CD4-positive, alpha-beta memory T cell (primary cell): ENCODE measurements at regions of chr12 and their contacts with region 1.

Region 1: DNA sequence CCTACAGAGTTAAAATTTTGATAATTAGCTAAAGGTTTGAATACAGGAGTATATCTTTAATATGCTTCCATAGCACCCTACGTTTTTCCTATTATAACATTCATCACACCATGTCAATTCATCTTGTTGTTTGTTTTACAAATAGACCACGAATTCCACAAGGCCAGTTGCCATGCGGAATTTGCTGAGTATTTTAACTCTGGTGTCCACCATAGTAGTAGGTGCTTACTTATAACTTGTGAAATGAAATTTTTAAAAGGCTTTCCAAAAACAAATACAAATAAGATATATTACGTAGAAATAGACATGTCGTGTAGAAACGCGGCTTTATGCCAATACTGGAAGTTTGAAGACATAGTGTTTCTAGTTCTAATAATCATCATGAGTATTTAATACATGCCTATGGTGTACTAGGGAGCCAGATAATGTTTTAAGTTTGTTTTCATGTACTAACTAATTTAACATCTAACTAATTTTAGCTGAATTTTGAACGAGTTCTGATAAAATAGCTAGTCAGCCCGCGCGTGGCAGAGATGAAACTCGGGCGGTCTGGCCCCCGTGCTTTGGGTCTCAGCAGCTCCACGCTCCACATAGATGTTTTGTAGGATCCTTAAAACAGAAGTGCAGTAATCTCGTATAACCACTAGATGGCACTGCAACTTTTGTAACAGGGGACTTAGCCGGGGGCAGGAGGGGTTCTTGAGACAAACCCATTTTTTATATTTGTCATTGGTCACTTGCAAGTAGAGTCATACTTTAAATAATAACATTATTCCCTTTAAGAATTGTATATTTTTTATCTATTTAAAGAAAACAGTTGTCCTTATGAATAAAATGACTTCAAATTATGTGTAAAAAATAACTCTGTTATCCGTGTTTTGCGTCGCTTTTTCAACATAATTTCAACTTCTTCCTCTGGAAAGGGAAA is 10.2 kb downstream of the CD69 start:
- DNase-seq: peak; percentile 67 to 75 (median 72)
- H3K4me3 ChIP-seq: no peak overlapping the region
- H3K4me3 Mint-ChIP-seq: peak overlapping the region; percentile 37 to 78 (median 72)
- H3K27ac ChIP-seq: peak overlapping the region; percentile 2
- H3K27ac Mint-ChIP-seq: peak overlapping the region; percentile 72 to 94 (median 85)
- H3K4me1 ChIP-seq: peaks cover 55% of the 10 kb centered on the region
- H3K4me1 Mint-ChIP-seq: peaks cover 30 to 51% (median 42%) of the 10 kb centered on the region in 4 donors
- H3K27me3 ChIP-seq: no peaks in the 10 kb centered on the region
- H3K27me3 Mint-ChIP-seq: no peaks in the 10 kb centered on the region

Region 2: GRCh38 chr12:9634177-9634803 is 116.2 kb before region 1 on chr12:
- CTCF ChIA-PET with region 1: interaction called, 53 read pairs
- POLR2A ChIA-PET with region 1: no interaction called
- intact Hi-C with region 1: no loop called
- DNase-seq: peak; percentile 76 to 77 (median 77)
- H3K4me3 ChIP-seq: no peak overlapping the region
- H3K4me3 Mint-ChIP-seq: peak overlapping the region in 6 of 8 donors; percentile 51 to 80 (median 61)
- H3K27ac ChIP-seq: no peak overlapping the region
- H3K27ac Mint-ChIP-seq: peak overlapping the region; percentile 22 to 97 (median 91)
- H3K4me1 ChIP-seq: peaks cover 70% of the 10 kb centered on the region
- H3K4me1 Mint-ChIP-seq: peaks cover 47 to 92% (median 73%) of the 10 kb centered on the region in 4 donors
- H3K27me3 ChIP-seq: no peaks in the 10 kb centered on the region
- H3K27me3 Mint-ChIP-seq: no peaks in the 10 kb centered on the region

Region 3: DNA sequence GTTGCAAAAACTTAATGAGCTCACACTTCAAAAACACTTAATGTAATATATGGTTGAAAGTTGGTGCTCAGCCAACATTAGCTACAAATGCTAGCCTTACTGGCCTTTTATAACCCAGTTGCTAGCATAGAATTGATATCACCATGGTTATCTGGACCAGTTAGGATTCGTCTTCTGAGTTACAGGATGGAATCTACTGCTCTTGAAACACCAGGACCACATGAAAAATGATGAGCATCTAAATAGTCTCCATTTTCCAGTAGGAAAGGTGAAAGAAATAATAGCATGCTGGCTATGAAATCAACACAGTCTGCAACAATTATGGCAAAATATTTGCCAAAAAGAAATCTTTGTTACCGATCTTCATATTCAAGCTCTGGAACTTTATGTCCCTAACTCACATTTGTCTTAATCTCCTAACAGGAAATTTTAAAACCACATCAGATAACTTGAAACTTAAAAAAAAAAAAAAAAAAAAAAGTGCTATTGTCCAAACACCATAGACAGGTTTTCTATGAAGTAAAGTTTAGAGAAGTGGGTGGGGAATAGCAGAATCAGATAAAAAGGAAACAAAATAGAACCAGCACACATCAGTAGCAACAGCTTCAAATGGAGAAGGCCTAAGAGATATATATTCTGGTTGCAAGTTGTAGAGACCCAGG is 22.8 kb after region 1 on chr12:
- CTCF ChIA-PET with region 1: interaction called, 68 read pairs
- POLR2A ChIA-PET with region 1: interaction called, 151 read pairs
- intact Hi-C with region 1: loop called (anchors 2 kb)
- DNase-seq: peak in 3 of 5 donors; percentile 45 to 59 (median 50)
- H3K4me3 ChIP-seq: no peak overlapping the region
- H3K4me3 Mint-ChIP-seq: peak overlapping the region; percentile 26 to 79 (median 68)
- H3K27ac ChIP-seq: peak overlapping the region; percentile 24
- H3K27ac Mint-ChIP-seq: peak overlapping the region; percentile 15 to 88 (median 77)
- H3K4me1 ChIP-seq: peaks cover 82% of the 10 kb centered on the region
- H3K4me1 Mint-ChIP-seq: peaks cover 68 to 93% (median 82%) of the 10 kb centered on the region in 4 donors
- H3K27me3 ChIP-seq: no peaks in the 10 kb centered on the region
- H3K27me3 Mint-ChIP-seq: no peaks in the 10 kb centered on the region

Region 4: GRCh38 chr12:9797722-9798619 is 47.4 kb after region 1 on chr12:
- CTCF ChIA-PET with region 1: interaction called, 889 read pairs
- POLR2A ChIA-PET with region 1: interaction called, 422 read pairs
- intact Hi-C with region 1: loop called (anchors 1 kb)
- DNase-seq: peak; percentile 73 to 79 (median 75)
- H3K4me3 ChIP-seq: no peak overlapping the region
- H3K4me3 Mint-ChIP-seq: peak overlapping the region in 4 of 8 donors; percentile 4 to 70 (median 41)
- H3K27ac ChIP-seq: no peak overlapping the region
- H3K27ac Mint-ChIP-seq: peak overlapping the region in 6 of 7 donors; percentile 57 to 89 (median 81)
- H3K4me1 ChIP-seq: peaks cover 51% of the 10 kb centered on the region
- H3K4me1 Mint-ChIP-seq: peaks cover 35 to 48% (median 43%) of the 10 kb centered on the region in 4 donors
- H3K27me3 ChIP-seq: no peaks in the 10 kb centered on the region
- H3K27me3 Mint-ChIP-seq: peaks cover 0 to 2% of the 10 kb centered on the region in 2 donors

Region 5: DNA sequence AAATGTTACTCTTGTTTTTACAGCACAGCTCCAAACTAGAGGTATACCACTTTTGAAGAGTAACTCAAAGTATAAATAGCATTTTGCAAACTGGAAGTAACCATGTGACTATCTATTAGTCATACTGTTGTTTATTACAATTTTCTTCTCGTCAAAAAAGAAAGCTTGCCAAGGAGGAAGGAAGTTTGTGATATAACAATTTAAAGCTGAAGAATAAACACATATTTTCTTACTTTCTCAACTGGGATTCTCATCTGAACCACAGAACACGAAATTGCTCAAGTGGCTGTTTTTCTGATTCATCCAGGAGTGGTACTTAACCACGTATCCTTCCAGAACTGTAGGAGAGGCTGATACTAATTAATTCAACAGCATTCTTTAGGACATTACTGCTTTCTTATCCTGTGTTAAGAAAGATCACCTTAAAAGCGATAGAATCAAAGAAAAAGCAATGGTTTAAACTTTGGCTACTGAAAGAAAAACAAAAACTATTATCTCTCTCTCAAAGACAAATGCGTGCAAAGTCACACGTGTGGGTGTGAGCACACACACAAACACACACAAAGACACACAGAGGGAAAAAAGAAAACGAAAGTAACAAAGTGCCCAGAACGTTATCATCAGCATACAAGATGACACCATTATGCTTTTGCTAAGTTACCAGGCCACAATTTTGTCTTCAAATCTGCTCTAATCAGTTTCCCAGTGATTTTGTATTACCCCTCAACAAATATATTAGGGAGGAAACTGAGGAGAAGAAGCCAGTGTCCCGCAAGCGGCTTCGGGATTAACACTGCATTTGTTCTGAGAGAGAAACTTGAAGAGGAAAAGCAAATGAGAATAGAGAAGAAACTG is 119.0 kb after region 1 on chr12 and contains the start of gene CLEC2B:
- CTCF ChIA-PET with region 1: interaction called, 20 read pairs
- POLR2A ChIA-PET with region 1: interaction called, 8 read pairs
- intact Hi-C with region 1: loop called (anchors 2 kb)
- DNase-seq: peak; percentile 58 to 74 (median 62)
- H3K4me3 ChIP-seq: peak within 1 kb of the TSS; percentile 55 to 67
- H3K4me3 Mint-ChIP-seq: peak within 1 kb of the TSS; percentile 89 to 96 (median 92)
- H3K27ac ChIP-seq: peak within 1 kb of the TSS; percentile 83
- H3K27ac Mint-ChIP-seq: peak within 1 kb of the TSS; percentile 94 to 100 (median 96)
- H3K4me1 ChIP-seq: peaks cover 15% of the 10 kb centered on the region
- H3K4me1 Mint-ChIP-seq: peaks cover 9 to 33% (median 19%) of the 10 kb centered on the region in 4 donors
- H3K27me3 ChIP-seq: no peaks in the 10 kb centered on the region
- H3K27me3 Mint-ChIP-seq: no peaks in the 10 kb centered on the region
- total RNA-seq, gene CLEC2B: 72.5 to 74.6 TPM

Region 6: DNA sequence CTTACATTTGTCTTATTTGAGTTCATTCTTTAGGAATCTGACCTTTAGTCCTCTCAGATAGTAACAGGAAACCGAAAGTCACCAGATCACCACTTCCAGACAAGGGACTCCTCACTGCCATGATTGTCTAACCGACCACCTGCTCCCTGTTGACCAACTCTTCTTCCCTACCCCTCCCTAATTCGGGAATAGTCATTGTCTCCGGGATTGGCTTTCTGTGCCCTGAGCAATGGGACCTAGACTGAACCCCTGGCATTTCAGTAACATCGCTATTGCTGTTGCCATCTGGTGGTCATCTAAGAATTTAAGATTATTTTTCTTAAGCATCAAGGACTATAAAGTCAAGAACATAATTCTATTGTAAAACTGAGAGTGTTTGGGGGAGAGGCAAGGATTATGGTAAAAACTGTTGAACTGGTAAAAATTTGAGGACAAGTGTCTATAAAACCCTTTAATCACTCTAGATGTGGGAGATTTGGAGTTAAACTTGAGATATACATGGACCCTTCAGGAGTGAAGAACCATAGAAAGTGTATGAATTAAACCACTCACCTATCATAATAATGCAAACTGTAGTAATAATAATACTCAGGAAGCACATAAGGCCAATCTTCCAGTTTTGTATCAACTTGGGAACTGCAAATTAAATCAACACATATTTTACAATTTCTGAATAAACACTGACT is 175.3 kb after region 1 on chr12:
- CTCF ChIA-PET with region 1: interaction called, 52 read pairs
- POLR2A ChIA-PET with region 1: interaction called, 3 read pairs
- intact Hi-C with region 1: loop called (anchors 1 kb)
- DNase-seq: peak in 4 of 5 donors; percentile 46 to 50 (median 48)
- H3K4me3 ChIP-seq: peak overlapping the region in 1 of 2 donors; percentile 17
- H3K4me3 Mint-ChIP-seq: peak overlapping the region in 7 of 8 donors; percentile 51 to 86 (median 78)
- H3K27ac ChIP-seq: no peak overlapping the region
- H3K27ac Mint-ChIP-seq: peak overlapping the region in 1 of 7 donors; percentile 81
- H3K4me1 ChIP-seq: no peaks in the 10 kb centered on the region
- H3K4me1 Mint-ChIP-seq: peaks cover 5 to 10% (median 5%) of the 10 kb centered on the region in 4 donors
- H3K27me3 ChIP-seq: no peaks in the 10 kb centered on the region
- H3K27me3 Mint-ChIP-seq: peaks cover 1 to 6% of the 10 kb centered on the region in 2 donors

Region 7: GRCh38 chr12:10190558-10191388 is 440.2 kb after region 1 on chr12:
- CTCF ChIA-PET with region 1: interaction called, 3 read pairs
- POLR2A ChIA-PET with region 1: no interaction called
- intact Hi-C with region 1: loop called (anchors 1 kb)
- DNase-seq: peak; percentile 41 to 54 (median 49)
- H3K4me3 ChIP-seq: no peak overlapping the region
- H3K4me3 Mint-ChIP-seq: no peak overlapping the region
- H3K27ac ChIP-seq: no peak overlapping the region
- H3K27ac Mint-ChIP-seq: no peak overlapping the region
- H3K4me1 ChIP-seq: no peaks in the 10 kb centered on the region
- H3K4me1 Mint-ChIP-seq: peaks cover 3 to 5% (median 4%) of the 10 kb centered on the region in 4 donors
- H3K27me3 ChIP-seq: no peaks in the 10 kb centered on the region
- H3K27me3 Mint-ChIP-seq: peaks cover 10 to 17% of the 10 kb centered on the region in 2 donors